HEK293 (cell line): ENCODE measurements at regions of chr15 and their contacts with region 1.

Region 1: DNA sequence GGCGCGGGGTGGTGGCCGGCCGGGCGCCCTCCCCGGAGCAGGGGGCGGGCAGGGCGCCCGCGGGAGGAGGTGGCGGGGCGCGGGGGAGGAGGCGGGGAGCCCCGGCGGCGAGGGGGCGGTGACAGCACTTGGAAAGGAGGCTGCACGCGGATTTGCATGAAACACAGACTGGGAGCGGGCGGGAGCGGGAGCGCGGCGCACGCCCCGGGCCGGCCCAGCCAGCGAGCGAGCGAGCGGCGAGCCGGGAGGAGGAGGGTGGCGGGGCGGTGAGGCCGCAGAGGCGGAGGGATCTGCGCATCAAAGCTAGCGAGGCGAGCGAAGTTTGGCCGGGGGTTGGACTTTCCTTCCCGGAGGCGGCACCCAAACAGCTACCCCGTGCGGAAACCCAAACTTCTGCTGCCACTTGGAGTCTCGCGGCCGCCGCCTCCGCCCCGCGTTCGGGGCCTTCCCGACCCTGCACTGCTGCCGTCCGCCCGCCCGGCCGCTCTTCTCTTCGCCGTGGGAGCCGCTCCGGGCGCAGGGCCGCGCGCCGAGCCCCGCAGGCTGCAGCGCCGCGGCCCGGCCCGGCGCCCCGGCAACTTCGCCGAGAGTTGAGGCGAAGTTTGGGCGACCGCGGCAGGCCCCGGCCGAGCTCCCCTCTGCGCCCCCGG is at the start of gene SMAD3:
- H3K4me3 ChIP-seq: peak within 1 kb of the TSS; percentile 80
- H3K27ac ChIP-seq: peak within 1 kb of the TSS; percentile 98
- H3K4me1 ChIP-seq: peaks cover 22% of the 10 kb centered on the region
- CTCF ChIP-seq: no peak

Region 2: DNA sequence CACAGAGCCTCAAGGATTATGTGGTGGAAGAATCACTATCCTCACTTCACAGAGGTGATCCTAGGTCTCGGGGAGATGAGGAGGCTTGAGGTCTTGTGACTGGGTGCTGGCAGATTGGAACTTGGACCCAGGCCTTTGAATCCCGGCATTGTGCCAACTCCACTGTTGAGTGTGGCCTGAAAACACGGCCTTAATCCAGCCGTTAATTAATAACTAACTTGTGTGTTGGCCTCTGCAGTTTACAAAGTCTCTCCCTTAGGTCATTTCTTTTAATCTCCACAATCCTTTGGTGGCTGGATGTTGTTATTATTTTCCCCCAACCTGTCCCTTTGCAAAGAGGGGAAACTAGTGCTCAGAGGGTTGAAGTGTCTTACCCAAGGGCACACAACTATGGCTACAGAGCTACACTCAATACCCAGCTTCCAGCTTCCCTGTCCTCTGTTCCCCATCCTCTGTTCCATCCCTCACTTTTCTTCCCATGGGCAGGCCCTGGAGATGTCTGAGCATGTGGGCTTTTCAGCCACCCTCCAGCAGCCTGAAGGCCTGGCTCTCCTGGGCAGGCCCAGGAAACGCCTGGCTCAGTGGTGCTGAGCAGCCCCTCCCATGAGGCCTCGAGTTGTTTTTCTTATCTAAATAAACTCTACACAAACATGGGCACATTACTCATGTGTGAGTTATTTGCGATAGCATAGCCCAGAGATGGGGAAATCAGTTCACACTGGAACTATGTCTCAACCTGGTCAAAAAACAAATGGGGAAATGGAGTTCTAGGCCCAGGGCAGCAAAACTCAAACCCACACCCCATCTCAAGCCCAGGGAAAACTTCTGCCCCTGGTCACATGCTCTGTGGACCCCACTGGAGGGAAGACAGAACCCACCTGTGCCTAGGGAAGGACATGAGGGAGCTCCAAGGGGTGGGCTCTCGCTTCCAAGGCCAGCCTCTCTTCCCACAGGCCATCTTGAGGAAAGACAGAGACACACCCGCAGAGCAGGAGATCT is 17.0 kb before region 1 on chr15:
- CTCF ChIA-PET with region 1: interaction called, 3 read pairs
- POLR2A ChIA-PET with region 1: interaction called, 18 read pairs
- H3K4me3 ChIP-seq: no peak overlapping the region
- H3K27ac ChIP-seq: peak overlapping the region; percentile 77
- H3K4me1 ChIP-seq: peaks cover 23% of the 10 kb centered on the region
- CTCF ChIP-seq: no peak

Region 3: GRCh38 chr15:67080900-67081431 is 15.4 kb after region 1 on chr15:
- CTCF ChIA-PET with region 1: interaction called, 24 read pairs
- POLR2A ChIA-PET with region 1: interaction called, 5 read pairs
- H3K4me3 ChIP-seq: no peak overlapping the region
- H3K27ac ChIP-seq: no peak overlapping the region
- H3K4me1 ChIP-seq: peaks cover 19% of the 10 kb centered on the region
- CTCF ChIP-seq: peak; percentile 51; the same call in 1 of the 2 replicates